Lower leg skin (tissue), 4 donors: ENCODE measurements at regions of chr6 and their contacts with region 1.

Region 1: DNA sequence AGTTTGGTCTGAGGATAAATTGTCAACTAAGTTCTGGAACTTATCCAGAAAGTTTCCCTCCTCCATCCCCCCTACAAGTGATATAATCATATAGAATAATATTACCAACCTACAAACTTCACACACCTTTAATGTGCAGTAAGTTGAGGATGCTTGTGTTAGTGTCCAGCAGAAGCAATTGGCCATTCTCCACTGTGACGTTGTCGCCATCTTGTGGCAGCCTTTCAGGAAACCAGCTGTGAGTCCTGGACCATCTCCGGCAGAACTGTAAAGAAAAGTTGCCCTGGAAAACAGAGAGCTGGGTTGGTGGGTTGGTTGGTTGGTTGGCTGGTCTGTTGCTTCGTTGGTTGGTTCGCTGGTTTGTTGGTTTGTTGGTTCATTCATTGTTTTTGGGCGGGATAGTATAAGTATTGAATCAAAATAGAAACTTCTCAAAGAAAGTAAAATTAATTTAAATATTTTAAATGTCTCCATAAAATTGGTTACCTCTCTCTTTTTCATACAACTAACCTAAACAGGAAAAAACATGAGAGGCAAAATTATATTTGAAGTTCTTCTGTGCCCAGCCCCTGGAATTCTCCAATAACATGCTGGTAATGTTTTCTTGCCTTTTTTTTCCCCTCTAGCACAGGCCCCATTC is 127.5 kb downstream of the PKHD1 start:
- DNase-seq: peak; percentile 67 to 88
- H3K4me3 ChIP-seq: no peak overlapping the region
- CTCF ChIP-seq: no peak
- POLR2A ChIP-seq: no peak

Region 2: DNA sequence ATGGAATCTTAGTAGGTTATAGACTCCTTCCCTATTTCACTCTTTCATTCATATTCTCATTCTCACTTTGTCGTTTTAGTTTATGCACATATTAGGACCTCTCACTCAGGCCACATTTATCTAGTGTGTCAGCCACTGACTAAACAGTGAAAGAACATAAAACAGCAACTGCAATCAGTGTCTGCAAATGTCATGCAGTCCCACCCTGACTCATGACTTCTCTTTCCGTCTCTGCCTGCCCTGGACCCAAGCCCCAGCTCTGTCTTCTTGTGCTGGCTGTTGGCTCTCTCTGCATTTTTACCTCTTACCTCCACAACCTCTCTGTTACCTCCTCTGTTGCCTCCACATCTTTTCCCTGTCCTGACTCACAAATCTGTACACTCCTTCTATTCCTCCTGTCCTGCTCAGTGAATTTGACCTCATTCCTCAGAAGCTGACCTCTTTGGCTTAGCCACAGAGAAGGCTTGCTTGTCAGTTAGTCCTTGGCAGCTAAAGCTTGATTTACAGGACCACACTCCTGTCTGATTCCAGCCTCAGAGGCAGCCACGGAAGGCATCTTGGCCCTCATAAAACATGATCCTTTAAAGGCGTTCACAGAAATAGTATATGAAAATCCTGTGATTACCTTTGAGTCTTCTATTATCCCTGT is 120.0 kb before region 1 on chr6:
- intact Hi-C with region 1: loop called (anchors 10 kb)
- DNase-seq: no peak
- H3K4me3 ChIP-seq: no peak overlapping the region
- CTCF ChIP-seq: no peak
- POLR2A ChIP-seq: no peak